IMR-90 (cell line): ENCODE measurements at regions of chr1 and their contacts with region 1.

Region 1: DNA sequence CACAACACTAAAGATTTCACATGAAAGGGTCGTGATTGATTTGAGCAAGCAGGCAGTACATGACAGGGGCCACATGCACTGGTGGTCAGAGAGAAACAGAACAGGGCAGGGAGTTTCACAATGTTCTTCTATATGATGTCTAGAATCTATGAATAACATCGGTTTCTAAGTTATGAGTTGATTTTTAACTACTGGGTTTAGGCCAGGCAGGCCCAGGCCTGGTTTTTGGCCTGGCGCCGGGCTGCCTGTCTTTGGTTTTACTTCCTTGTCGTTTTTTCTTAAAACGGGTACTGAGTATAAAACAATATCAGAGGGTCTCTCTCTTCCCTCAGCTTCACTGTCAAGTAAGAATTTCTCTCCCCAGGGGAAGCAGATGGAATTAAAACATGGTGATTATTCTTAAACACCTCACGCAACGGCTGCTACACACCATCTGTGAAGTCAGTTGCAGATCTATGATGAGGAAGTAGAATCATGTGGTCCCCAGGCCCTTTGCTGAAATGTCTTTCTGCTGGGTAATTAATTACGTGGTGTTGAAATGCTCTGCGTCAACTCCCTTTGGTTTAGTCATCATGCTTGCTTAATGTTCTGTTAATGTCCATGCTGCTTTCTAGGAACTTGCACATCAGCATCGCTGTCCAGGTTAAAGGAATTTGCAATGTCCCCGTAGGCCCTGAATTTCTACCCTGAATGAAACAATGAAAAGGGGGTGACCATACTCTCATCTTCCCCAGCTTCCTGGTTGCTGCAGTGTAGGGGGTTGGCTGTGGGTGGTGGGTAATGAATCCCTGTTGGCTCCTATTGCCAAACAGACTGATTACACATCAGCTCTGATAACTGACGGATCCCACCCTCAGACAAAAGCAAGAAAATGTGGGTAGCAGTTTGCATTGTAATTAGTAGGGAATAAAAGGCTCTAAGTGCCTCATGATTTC is 70.3 kb downstream of the SERINC2 start:
- DNase-seq: peak; percentile 96
- ATAC-seq: peak; percentile 96
- H3K4me3 ChIP-seq: no peak overlapping the region
- H3K27ac ChIP-seq: no peak overlapping the region; the same call in 1 of the 2 replicates
- H3K4me1 ChIP-seq: peaks cover 8% of the 10 kb centered on the region; the same call in 1 of the 2 replicates
- H3K27me3 ChIP-seq: peaks cover 14% of the 10 kb centered on the region
- CTCF ChIP-seq: no peak
- POLR2A ChIP-seq: no peak
- RAD21 ChIP-seq: no peak

Region 2: GRCh38 chr1:31529999-31530684 is 46.9 kb after region 1 on chr1:
- CTCF ChIA-PET with region 1: no interaction called
- POLR2A ChIA-PET with region 1: no interaction called
- dilution Hi-C with region 1: no loop called
- in situ Hi-C with region 1: no loop called
- intact Hi-C with region 1: loop called (anchors 5 kb)
- DNase-seq: peak; percentile 34
- ATAC-seq: no peak
- H3K4me3 ChIP-seq: no peak overlapping the region
- H3K27ac ChIP-seq: no peak overlapping the region
- H3K4me1 ChIP-seq: peaks cover 6% of the 10 kb centered on the region
- H3K27me3 ChIP-seq: peaks cover 15% of the 10 kb centered on the region
- CTCF ChIP-seq: no peak
- POLR2A ChIP-seq: no peak
- RAD21 ChIP-seq: no peak